Naive thymus-derived CD4-positive, alpha-beta T cell (primary cell): ENCODE measurements at regions of chr7 and their contacts with region 1.

Region 1: DNA sequence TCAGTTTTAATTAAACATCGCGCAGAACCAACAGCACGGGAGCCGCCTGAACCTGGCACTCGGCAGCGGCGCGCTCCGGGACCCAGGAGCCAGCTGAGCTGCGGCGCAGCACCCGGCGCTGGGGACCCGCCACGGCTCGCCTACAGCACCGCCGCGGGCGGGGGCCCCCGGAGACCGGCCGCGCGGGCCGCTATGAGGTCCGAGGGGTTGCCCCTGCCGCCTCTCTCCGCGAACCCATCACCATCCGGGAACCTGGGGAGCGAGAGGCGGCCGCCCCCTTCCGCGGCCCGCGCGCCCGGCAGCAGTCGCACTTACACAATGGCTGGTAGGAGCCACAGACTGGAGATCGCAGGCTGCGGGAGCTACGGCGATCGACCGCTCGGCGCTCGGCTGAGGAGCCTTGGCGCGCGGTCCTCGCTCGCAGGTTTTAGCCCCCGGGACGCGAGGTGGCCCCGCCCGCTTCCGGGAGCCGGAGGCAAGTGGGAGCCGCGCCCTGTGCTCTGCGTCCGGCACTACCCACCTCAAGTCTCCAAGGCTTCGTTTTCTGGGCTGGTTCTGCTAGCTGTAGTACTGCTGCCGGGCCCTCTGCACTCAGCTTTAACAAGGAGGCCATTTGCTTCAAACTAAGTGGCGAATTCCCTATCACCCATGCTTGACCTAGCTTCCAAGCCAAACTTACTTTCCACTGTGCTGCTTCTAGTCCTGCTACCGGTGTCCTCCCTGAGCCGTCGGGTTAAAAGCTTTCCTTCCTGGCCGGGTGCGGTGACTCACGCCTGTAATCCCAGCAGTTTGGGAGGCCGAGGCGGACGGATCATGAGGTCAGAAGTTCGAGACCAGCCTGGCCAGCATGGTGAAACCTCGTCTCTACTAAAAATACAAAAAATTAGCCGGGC is at the start of gene TPK1:
- DNase-seq: peak; percentile 79 to 93 (median 91)
- ATAC-seq: peak; percentile 96
- H3K4me3 ChIP-seq: peak within 1 kb of the TSS; percentile 90
- H3K4me3 Mint-ChIP-seq: peak within 1 kb of the TSS; percentile 92 to 99 (median 98)
- H3K27ac ChIP-seq: peak within 1 kb of the TSS; percentile 89
- H3K27ac Mint-ChIP-seq: peak within 1 kb of the TSS; percentile 97 to 100 (median 98)
- H3K4me1 ChIP-seq: peaks cover 8 to 28% of the 10 kb centered on the region in 2 donors
- H3K4me1 Mint-ChIP-seq: peaks cover 24 to 66% (median 37%) of the 10 kb centered on the region in 7 donors
- H3K27me3 ChIP-seq: no peaks in the 10 kb centered on the region
- H3K27me3 Mint-ChIP-seq: no peaks in the 10 kb centered on the region
- total RNA-seq, gene TPK1: 18.2 to 32.9 (median 26.3) TPM

Region 2: DNA sequence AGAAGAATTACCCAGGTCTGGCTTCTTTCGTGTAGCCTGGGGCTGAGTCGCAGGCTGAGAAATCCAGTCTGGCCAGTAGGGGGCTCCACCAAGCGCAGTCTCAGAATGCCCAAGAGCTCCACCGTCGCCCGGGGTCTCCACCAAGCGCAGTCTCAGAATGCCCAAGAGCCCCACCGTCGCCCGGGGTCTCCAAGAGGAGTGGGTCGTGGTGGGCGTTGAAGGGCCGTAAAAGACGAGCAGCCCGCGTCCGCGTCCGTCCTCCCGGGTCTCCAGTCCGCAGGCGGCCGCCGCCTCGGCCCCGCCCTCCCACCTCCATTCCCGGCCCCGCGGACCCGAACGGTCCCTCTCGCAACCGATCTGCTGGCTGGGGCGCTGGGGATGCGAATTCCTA is 1455.6 kb before region 1 on chr7:
- CTCF ChIA-PET with region 1: no interaction called
- POLR2A ChIA-PET with region 1: no interaction called
- intact Hi-C with region 1: loop called in 1 of 2 experiments (anchors 10 kb)
- DNase-seq: peak; percentile 76 to 90 (median 84)
- ATAC-seq: peak; percentile 73
- H3K4me3 ChIP-seq: peak overlapping the region; percentile 92
- H3K4me3 Mint-ChIP-seq: peak overlapping the region in 9 of 10 donors; percentile 84 to 96 (median 91)
- H3K27ac ChIP-seq: peak overlapping the region; percentile 91
- H3K27ac Mint-ChIP-seq: peak overlapping the region; percentile 90 to 96 (median 93)
- H3K4me1 ChIP-seq: peaks cover 58 to 70% of the 10 kb centered on the region in 2 donors
- H3K4me1 Mint-ChIP-seq: peaks cover 35 to 46% (median 42%) of the 10 kb centered on the region in 7 donors
- H3K27me3 ChIP-seq: no peaks in the 10 kb centered on the region
- H3K27me3 Mint-ChIP-seq: no peaks in the 10 kb centered on the region

Region 3: DNA sequence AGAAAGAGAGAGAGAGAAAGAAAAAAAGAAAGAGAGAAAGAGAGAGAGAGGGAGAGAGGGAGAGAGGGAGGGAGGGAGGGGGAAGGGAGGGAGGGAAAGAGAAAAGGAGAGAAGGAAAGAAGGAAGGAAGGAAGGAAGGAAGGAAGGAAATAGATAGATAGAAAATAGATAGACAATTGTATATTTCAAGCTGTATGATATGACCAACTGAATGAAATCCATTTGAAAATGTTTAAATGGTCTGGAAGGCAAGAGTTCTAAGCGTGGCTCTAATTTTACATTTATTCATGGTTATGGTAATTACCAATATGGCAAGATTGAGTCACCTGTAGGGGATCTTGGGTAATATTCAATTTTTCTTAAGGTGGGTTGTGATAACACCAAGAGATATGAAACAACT is 677.0 kb before region 1 on chr7:
- CTCF ChIA-PET with region 1: no interaction called
- POLR2A ChIA-PET with region 1: no interaction called
- intact Hi-C with region 1: no loop called
- DNase-seq: no peak
- ATAC-seq: no peak
- H3K4me3 ChIP-seq: no peak overlapping the region
- H3K4me3 Mint-ChIP-seq: no peak overlapping the region
- H3K27ac ChIP-seq: no peak overlapping the region
- H3K27ac Mint-ChIP-seq: no peak overlapping the region
- H3K4me1 ChIP-seq: no peaks in the 10 kb centered on the region
- H3K4me1 Mint-ChIP-seq: no peaks in the 10 kb centered on the region
- H3K27me3 ChIP-seq: no peaks in the 10 kb centered on the region
- H3K27me3 Mint-ChIP-seq: peaks cover 6 to 25% (median 18%) of the 10 kb centered on the region in 5 donors

Region 4: GRCh38 chr7:144747936-144748335 is 88.0 kb before region 1 on chr7:
- CTCF ChIA-PET with region 1: no interaction called
- POLR2A ChIA-PET with region 1: interaction called, 10 read pairs
- intact Hi-C with region 1: no loop called
- DNase-seq: no peak
- ATAC-seq: no peak
- H3K4me3 ChIP-seq: no peak overlapping the region
- H3K4me3 Mint-ChIP-seq: no peak overlapping the region
- H3K27ac ChIP-seq: no peak overlapping the region
- H3K27ac Mint-ChIP-seq: no peak overlapping the region
- H3K4me1 ChIP-seq: no peaks in the 10 kb centered on the region
- H3K4me1 Mint-ChIP-seq: peaks cover 0 to 6% (median 0%) of the 10 kb centered on the region in 7 donors
- H3K27me3 ChIP-seq: no peaks in the 10 kb centered on the region
- H3K27me3 Mint-ChIP-seq: no peaks in the 10 kb centered on the region

Region 5: GRCh38 chr7:144786522-144786921 is 49.4 kb before region 1 on chr7:
- CTCF ChIA-PET with region 1: interaction called, 8 read pairs
- POLR2A ChIA-PET with region 1: interaction called, 57 read pairs
- intact Hi-C with region 1: loop called (anchors 1 kb)
- DNase-seq: peak in 1 of 9 donors; percentile 15
- ATAC-seq: peak; percentile 50
- H3K4me3 ChIP-seq: no peak overlapping the region
- H3K4me3 Mint-ChIP-seq: no peak overlapping the region
- H3K27ac ChIP-seq: no peak overlapping the region
- H3K27ac Mint-ChIP-seq: peak overlapping the region in 3 of 9 donors; percentile 12 to 40 (median 28)
- H3K4me1 ChIP-seq: no peaks in the 10 kb centered on the region
- H3K4me1 Mint-ChIP-seq: peaks cover 6 to 42% (median 24%) of the 10 kb centered on the region in 7 donors
- H3K27me3 ChIP-seq: no peaks in the 10 kb centered on the region
- H3K27me3 Mint-ChIP-seq: no peaks in the 10 kb centered on the region

Region 6: GRCh38 chr7:144805627-144806239 is 30.2 kb before region 1 on chr7:
- CTCF ChIA-PET with region 1: no interaction called
- POLR2A ChIA-PET with region 1: interaction called, 157 read pairs
- intact Hi-C with region 1: loop called in 1 of 2 experiments (anchors 5 kb)
- DNase-seq: no peak
- ATAC-seq: no peak
- H3K4me3 ChIP-seq: no peak overlapping the region
- H3K4me3 Mint-ChIP-seq: no peak overlapping the region
- H3K27ac ChIP-seq: no peak overlapping the region
- H3K27ac Mint-ChIP-seq: peak overlapping the region in 2 of 9 donors; percentile 12 to 21
- H3K4me1 ChIP-seq: peaks cover 0 to 23% of the 10 kb centered on the region in 2 donors
- H3K4me1 Mint-ChIP-seq: peaks cover 12 to 85% (median 75%) of the 10 kb centered on the region in 7 donors
- H3K27me3 ChIP-seq: no peaks in the 10 kb centered on the region
- H3K27me3 Mint-ChIP-seq: no peaks in the 10 kb centered on the region

Region 7: DNA sequence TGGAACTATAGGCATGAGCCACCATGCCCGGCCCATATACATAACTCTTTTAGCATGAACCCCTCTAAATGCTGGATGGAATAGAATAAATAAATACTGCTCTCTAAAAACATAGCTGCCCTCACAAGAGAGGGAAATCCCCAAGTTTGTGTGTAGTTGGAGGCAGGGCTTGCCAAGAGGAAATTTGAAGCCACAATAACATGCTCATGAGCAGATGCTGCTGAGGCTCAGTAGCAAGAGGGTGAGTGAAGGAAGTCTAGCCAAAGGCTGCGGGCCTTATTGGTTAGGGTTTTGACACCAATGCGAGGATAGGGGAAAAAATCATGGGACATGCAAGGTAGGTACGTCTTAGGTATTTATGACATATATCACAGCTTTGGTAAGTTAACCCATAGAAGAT is 17.4 kb before region 1 on chr7:
- CTCF ChIA-PET with region 1: interaction called, 20 read pairs
- POLR2A ChIA-PET with region 1: interaction called, 394 read pairs
- intact Hi-C with region 1: loop called (anchors 1 kb)
- DNase-seq: peak in 7 of 9 donors; percentile 64 to 83 (median 76)
- ATAC-seq: peak; percentile 97
- H3K4me3 ChIP-seq: no peak overlapping the region
- H3K4me3 Mint-ChIP-seq: peak overlapping the region; percentile 62 to 84 (median 72)
- H3K27ac ChIP-seq: peak overlapping the region; percentile 73
- H3K27ac Mint-ChIP-seq: peak overlapping the region; percentile 87 to 97 (median 93)
- H3K4me1 ChIP-seq: peaks cover 37 to 56% of the 10 kb centered on the region in 2 donors
- H3K4me1 Mint-ChIP-seq: peaks cover 35 to 95% (median 89%) of the 10 kb centered on the region in 7 donors
- H3K27me3 ChIP-seq: no peaks in the 10 kb centered on the region
- H3K27me3 Mint-ChIP-seq: no peaks in the 10 kb centered on the region